Activated CD4-positive, alpha-beta T cell treated with anti-CD3 and anti-CD28 coated beads for 36 hours (primary cell): ENCODE measurements at regions of chr11 and their contacts with region 1.

Region 1: DNA sequence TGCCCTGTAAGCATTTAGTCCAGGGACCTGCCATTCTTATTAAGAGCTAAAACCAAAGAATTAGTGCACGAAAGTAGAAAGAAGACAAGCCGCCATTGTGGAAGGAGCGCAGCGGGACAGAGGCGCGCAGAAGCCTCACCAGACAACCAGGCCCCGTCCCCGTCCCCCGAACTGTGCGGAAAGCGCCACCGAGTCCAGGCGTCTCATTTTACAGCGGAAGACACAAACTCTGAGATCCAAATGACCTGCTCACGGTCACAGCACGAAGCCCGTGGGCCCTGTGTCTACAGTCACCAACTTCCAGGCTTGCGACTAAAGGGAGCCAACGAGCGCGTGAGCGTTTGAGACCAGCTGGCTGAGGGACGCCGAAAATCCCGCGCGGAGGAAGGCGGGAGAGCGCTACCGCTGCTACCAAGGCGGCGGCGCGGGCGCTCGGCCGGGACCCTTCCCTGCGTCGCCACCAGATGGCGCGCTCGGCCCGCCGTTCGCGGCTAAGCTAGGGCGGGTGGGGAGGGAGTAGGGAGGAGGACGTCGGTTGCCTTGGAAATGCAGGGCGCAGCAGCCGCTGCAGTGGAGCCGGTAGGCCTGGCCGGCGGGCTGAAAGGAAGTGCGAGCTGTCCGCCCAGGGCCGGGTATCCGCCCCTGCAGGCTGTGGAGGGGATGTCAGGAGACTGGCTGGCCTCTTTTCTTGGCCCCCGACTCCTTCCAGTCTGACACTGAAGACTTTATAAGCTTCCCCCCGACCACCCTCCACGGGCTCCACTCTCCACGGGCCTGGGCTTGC is 434 bp upstream of the CCDC83 start:
- DNase-seq: peak; percentile 94
- ATAC-seq: peak; percentile 93
- H3K4me3 Mint-ChIP-seq: peak overlapping the region; percentile 77
- H3K27ac Mint-ChIP-seq: peak overlapping the region; percentile 94
- H3K4me1 Mint-ChIP-seq: peaks cover 2% of the 10 kb centered on the region
- H3K27me3 Mint-ChIP-seq: no peaks in the 10 kb centered on the region

Region 2: DNA sequence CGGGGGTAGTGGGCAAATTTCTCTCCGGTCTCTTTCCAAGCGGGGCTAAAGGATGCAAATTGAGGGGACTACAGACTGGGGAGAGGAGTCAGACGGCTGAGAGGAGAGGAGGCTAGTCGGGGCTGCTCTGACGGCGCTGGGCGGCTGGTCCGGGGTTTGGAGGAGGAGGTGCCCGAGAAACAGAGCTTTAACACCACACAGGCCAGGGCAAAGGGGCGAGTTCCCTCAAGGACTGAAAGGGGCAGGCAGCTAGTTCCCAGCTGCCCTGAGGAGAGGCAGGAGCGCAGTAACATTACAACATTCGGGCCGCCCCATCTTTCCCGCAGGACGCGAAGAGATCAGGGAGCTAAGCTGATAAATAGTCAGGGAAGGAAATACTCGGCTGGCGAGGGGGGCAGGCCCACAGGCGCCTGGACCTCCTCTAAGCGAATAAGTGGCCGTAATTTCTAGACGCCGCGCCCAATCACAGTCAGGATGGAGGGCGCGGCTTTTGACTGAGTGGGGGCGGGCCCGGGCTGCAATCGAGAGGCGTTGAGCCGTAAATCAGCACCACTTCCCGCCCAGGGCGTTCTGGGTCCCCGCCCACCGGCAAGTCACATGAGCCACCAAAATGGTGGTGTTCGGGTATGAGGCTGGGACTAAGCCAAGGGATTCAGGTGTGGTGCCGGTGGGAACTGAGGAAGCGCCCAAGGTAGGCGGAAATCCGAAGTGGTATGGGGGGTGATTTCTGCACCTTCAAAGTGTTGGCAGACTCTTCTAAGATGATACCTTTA is 226.6 kb before region 1 on chr11 and contains the start of gene TMEM126B:
- CTCF ChIA-PET with region 1: interaction called, 3 read pairs
- POLR2A ChIA-PET with region 1: no interaction called
- intact Hi-C with region 1: loop called in 1 of 2 experiments (anchors 1 kb)
- DNase-seq: peak; percentile 99
- ATAC-seq: peak; percentile 95
- H3K4me3 Mint-ChIP-seq: peak within 1 kb of the TSS; percentile 98
- H3K27ac Mint-ChIP-seq: peak within 1 kb of the TSS; percentile 100
- H3K4me1 Mint-ChIP-seq: peaks cover 35% of the 10 kb centered on the region
- H3K27me3 Mint-ChIP-seq: no peaks in the 10 kb centered on the region
- total RNA-seq, gene TMEM126B: 62.7 to 74.2 TPM

Region 3: DNA sequence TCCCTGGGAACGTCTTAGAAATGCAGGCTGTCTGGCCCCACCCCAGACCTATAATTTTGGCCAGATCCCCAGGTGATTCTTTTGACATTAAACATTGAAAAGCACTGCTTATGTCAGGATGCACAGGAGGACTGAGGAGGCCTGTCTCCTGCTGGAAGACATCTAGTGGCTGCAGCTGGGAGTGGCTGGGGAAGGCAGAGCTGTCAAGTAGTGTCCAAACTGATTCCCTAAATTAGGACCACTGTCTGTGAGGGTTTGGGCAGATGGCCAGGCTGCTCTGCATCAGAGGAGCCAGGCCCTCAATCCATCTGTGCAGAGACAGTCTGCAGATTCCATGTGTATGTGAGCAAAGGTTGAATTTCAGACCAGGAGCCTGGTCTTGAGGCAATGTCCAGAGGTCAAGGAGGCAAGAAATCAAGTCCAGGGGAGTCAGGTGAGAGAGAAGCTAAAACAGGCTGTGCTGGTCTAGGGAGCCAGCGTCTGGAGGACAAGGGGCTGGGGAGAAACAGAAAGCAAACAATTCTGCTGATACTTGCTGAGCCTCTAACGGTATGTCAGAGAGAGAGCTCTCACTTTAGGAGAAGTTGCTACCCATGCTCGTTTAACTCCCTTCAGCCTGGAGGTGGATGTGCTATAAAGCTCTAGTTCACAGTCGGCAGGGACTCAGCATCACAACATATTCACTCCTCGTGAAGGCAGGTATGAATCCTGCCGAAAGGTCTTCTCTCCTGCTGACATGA is 28.5 kb before region 1 on chr11:
- CTCF ChIA-PET with region 1: interaction called, 6 read pairs
- POLR2A ChIA-PET with region 1: no interaction called
- intact Hi-C with region 1: loop called in 1 of 2 experiments (anchors 1 kb)
- DNase-seq: peak; percentile 48
- ATAC-seq: no peak
- H3K4me3 Mint-ChIP-seq: no peak overlapping the region
- H3K27ac Mint-ChIP-seq: peak overlapping the region; percentile 11
- H3K4me1 Mint-ChIP-seq: peaks cover 65% of the 10 kb centered on the region
- H3K27me3 Mint-ChIP-seq: no peaks in the 10 kb centered on the region

Region 4: DNA sequence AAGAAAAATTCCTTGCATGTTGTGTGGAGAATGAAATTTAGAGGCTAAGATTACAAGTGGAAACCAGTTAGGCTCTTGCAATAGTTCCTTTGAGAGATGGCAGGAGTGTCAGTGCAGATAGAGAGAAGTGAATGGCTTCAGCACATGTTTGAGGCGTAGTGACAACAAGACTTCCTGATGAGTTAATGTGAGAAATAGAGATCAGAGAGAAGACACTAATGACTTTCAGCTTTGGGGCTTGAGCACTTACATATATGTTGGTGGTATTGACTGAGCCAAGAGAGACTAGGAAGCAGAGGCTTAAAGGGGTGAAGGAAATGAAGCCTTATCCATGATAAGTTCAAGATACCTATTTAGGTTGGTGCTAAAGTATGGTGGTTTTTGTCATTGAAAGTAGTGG is 270.1 kb after region 1 on chr11:
- CTCF ChIA-PET with region 1: no interaction called
- POLR2A ChIA-PET with region 1: no interaction called
- intact Hi-C with region 1: no loop called
- DNase-seq: no peak
- ATAC-seq: peak; percentile 96
- H3K4me3 Mint-ChIP-seq: no peak overlapping the region
- H3K27ac Mint-ChIP-seq: peak overlapping the region; percentile 35
- H3K4me1 Mint-ChIP-seq: peaks cover 17% of the 10 kb centered on the region
- H3K27me3 Mint-ChIP-seq: peaks cover 2% of the 10 kb centered on the region

Region 5: DNA sequence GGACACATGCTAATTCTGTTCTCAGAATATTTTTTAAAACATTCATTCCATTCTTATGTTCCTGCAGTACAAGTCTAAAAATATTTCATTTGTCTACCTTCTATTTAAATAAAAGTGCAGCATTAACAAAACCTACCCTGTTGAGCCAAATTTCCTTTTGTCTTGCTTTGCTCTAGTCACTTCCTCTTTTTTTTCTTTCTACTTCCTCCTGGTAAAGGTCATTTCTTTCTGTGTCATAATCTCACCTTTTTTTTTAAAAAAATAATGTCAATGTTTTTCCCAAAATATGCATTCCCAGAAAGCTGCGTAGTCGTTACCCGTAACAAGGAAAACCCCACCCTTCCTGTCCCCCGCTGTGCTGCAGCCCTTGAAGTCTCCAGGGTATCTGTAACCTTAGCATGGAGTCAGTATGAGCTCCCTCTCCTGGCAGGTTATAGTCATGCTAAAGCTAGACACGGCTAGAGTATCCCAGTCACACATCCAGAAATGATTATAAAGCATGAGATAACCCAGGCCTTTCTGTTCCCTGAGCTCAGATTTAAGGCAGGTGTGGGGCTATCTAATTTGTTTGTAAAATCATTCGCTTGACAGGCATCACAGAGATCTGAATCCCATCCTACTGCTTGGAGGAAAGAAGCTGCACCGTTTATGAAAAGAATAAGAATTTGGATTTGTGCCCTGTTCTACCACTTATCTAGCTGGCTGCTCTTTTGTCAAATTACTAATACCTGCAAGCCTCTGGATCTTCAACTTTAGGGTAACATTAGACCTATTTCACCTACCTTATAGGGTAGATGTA is 338.7 kb after region 1 on chr11:
- CTCF ChIA-PET with region 1: interaction called, 6 read pairs
- POLR2A ChIA-PET with region 1: no interaction called
- intact Hi-C with region 1: loop called (anchors 1 to 5 kb)
- DNase-seq: peak; percentile 74
- ATAC-seq: peak; percentile 99
- H3K4me3 Mint-ChIP-seq: peak overlapping the region; percentile 53
- H3K27ac Mint-ChIP-seq: peak overlapping the region; percentile 82
- H3K4me1 Mint-ChIP-seq: peaks cover 27% of the 10 kb centered on the region
- H3K27me3 Mint-ChIP-seq: peaks cover 6% of the 10 kb centered on the region

Region 6: GRCh38 chr11:86418917-86419316 is 564.2 kb after region 1 on chr11:
- CTCF ChIA-PET with region 1: interaction called, 3 read pairs
- POLR2A ChIA-PET with region 1: no interaction called
- intact Hi-C with region 1: loop called in 1 of 2 experiments (anchors 1 kb)
- DNase-seq: peak; percentile 19
- ATAC-seq: peak; percentile 83
- H3K4me3 Mint-ChIP-seq: no peak overlapping the region
- H3K27ac Mint-ChIP-seq: no peak overlapping the region
- H3K4me1 Mint-ChIP-seq: peaks cover 10% of the 10 kb centered on the region
- H3K27me3 Mint-ChIP-seq: no peaks in the 10 kb centered on the region

Region 7: GRCh38 chr11:86608251-86608799 is 753.6 kb after region 1 on chr11:
- CTCF ChIA-PET with region 1: interaction called, 4 read pairs
- POLR2A ChIA-PET with region 1: no interaction called
- intact Hi-C with region 1: loop called in 1 of 2 experiments (anchors 1 kb)
- DNase-seq: peak; percentile 68
- ATAC-seq: peak; percentile 87
- H3K4me3 Mint-ChIP-seq: no peak overlapping the region
- H3K27ac Mint-ChIP-seq: no peak overlapping the region
- H3K4me1 Mint-ChIP-seq: peaks cover 17% of the 10 kb centered on the region
- H3K27me3 Mint-ChIP-seq: no peaks in the 10 kb centered on the region